Activated T-helper 1 cell treated with anti-CD3 and anti-CD28 coated beads, Interleukin-12 subunit alpha, Interleukin-12 subunit beta, Interleukin-2, Interleukin-4 antibody, amounts not matched to agents 30 ng/mL and 10 ng/mL and 1 ng/mL, durations not matched to agents 14 hours and 24 hours and 36 hours (primary cell): ENCODE measurements at regions of chr11 and their contacts with region 1.

Region 1: GRCh38 chr11:88357323-88358039 is 19.9 kb upstream of the CTSC start:
- DNase-seq: no peak
- H3K4me3 Mint-ChIP-seq: peak overlapping the region; percentile 45
- H3K27ac Mint-ChIP-seq: peak overlapping the region; percentile 59
- H3K4me1 Mint-ChIP-seq: peaks cover 52% of the 10 kb centered on the region
- H3K27me3 Mint-ChIP-seq: no peaks in the 10 kb centered on the region

Region 2: GRCh38 chr11:86523738-86524619 is 1833.5 kb before region 1 on chr11:
- intact Hi-C with region 1: loop called (anchors 10 kb)
- DNase-seq: no peak
- H3K4me3 Mint-ChIP-seq: peak overlapping the region; percentile 56
- H3K27ac Mint-ChIP-seq: peak overlapping the region; percentile 90
- H3K4me1 Mint-ChIP-seq: peaks cover 36% of the 10 kb centered on the region
- H3K27me3 Mint-ChIP-seq: peaks cover 2% of the 10 kb centered on the region

Region 3: DNA sequence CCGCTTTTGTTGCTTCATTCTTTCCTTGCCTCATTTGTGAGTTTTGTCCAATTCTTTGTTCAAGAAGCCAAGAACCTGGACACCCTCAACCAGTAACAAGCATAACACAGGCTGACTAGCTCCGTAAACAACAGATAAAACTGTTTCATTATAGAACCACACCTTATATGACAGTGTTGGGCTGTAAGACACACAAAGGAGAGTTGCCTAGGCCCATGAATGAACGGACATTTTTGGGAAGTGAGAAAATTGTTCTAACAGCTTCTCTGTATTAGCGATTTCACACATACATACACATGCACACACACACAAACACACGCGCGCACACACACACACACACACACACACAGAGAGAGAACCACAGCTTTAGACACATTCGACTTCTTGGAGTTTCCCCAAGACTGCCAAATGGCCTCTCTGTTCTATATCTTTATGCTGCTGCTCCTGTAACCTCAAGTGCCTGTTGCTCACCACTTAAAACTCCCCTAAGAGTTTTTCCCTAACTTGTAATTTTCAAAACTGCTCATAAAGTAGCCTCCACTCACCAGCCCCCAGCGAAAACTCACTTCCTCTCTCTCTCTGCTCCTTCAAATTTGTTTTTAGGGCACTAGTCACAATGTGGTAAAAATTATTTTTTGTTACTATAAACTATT is 55.9 kb before region 1 on chr11:
- intact Hi-C with region 1: loop called (anchors 1 kb)
- DNase-seq: no peak
- H3K4me3 Mint-ChIP-seq: peak overlapping the region; percentile 1
- H3K27ac Mint-ChIP-seq: peak overlapping the region; percentile 95
- H3K4me1 Mint-ChIP-seq: peaks cover 50% of the 10 kb centered on the region
- H3K27me3 Mint-ChIP-seq: no peaks in the 10 kb centered on the region

Region 4: DNA sequence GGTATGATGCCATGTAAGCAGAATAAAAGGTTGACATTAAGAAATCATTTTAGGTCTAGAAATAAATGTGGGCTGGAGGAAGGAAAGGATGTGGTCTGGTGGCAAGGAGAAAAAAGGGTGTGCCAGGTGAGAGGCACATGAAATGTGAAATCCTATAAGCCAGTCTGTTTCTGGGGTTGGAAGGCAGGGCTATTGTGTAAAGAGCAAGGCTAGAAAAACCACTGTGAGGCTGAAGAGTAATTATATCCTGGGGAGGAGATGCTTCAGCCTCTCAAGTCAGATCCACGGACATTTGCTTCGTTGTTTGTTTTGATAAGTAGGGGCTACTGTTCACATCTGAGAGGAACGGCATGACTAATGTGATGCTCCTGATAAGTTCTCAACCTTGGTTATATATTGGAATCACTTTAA is 57.5 kb after region 1 on chr11:
- intact Hi-C with region 1: loop called (anchors 1 kb)
- DNase-seq: peak; percentile 34
- H3K4me3 Mint-ChIP-seq: peak overlapping the region; percentile 12
- H3K27ac Mint-ChIP-seq: peak overlapping the region; percentile 18
- H3K4me1 Mint-ChIP-seq: peaks cover 59% of the 10 kb centered on the region
- H3K27me3 Mint-ChIP-seq: no peaks in the 10 kb centered on the region

Region 5: GRCh38 chr11:88535916-88536547 is 178.6 kb after region 1 on chr11:
- intact Hi-C with region 1: loop called (anchors 1 kb)
- DNase-seq: no peak
- H3K4me3 Mint-ChIP-seq: no peak overlapping the region
- H3K27ac Mint-ChIP-seq: peak overlapping the region; percentile 47
- H3K4me1 Mint-ChIP-seq: peaks cover 37% of the 10 kb centered on the region
- H3K27me3 Mint-ChIP-seq: peaks cover 9% of the 10 kb centered on the region

Region 6: DNA sequence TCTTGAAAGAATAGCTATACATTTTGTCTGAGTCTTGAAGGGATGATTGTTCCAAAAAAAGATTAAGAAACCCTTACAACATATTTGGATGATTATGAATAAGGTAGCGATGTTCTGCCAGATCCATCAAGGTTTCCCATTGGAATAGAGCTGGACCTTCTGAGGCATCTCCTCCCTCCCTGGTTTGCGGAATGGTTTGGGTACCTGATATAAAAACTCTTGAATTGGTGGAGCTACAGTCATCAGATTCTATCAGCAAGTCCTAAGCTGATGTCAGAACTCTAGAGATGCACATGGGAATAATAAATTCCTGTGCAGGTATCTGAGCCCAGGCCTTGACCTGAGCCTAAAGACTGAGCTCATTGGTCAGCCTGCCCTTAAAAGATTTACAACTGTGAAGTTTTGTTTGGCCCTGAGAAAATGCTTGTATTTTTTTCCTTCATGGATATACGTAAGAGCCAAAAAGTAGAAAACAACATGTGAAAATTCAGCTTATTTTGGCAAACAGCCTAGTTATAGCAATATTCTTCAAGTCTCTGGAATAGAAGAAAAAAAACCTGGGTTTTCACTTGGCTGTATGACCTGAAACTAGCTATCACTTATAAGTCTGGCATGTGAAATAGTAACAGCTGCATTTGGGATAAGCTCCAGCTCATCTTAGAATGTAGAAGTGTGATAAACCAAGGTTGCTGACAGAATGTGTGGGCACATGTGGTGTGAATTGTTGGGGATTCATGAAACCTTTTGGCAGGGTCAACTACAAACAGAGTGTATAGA is 245.8 kb after region 1 on chr11:
- intact Hi-C with region 1: no loop called
- DNase-seq: no peak
- H3K4me3 Mint-ChIP-seq: no peak overlapping the region
- H3K27ac Mint-ChIP-seq: no peak overlapping the region
- H3K4me1 Mint-ChIP-seq: no peaks in the 10 kb centered on the region
- H3K27me3 Mint-ChIP-seq: no peaks in the 10 kb centered on the region